ENCODE measurements at regions of chr22 and their contacts with region 1.

Region 1: DNA sequence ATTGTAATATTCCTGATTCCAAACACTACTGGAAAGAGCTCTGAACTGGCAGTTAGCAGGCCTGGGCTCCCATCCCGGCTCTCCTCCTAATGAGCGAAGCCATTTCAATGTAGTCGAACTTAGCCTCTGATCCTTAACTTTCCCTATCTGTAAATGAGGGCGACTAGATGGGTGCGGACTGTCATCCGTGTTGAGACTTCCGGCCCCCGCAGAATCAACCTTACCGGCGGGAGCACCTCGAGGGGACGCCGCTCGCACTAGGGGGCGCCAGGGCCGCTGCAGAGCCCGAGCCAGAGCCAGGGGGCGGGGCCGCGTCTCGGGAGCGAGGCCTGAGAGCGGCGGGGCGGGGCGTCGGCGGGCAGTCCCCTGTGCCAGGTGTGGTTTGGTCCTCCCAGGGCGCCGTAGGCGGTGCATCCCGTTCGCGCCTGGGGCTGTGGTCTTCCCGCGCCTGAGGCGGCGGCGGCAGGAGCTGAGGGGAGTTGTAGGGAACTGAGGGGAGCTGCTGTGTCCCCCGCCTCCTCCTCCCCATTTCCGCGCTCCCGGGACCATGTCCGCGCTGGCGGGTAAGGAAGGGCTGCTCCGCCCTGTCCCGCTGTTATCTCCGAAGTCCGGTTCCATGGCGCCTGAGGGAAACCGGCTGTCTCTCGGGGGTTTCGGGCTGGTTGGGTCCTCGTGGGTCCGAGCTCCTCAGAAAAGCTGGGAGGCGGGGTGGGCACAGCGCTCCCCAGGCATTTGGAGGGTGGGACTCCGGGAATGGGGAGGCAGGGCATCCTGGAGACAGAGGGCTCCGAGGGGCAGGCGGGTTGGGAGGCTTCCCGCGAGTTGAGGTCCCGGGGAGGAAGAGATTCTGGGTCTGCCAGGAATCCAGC is at the start of gene LIMK2:
- DNase-seq: peak; percentile 100
- ATAC-seq: peak; percentile 97
- H3K4me3 Mint-ChIP-seq: peak within 1 kb of the TSS; percentile 87
- H3K27ac Mint-ChIP-seq: peak within 1 kb of the TSS; percentile 90
- H3K4me1 Mint-ChIP-seq: peaks cover 29% of the 10 kb centered on the region
- H3K27me3 Mint-ChIP-seq: no peaks in the 10 kb centered on the region
- total RNA-seq, gene LIMK2: 38.9 to 39.9 TPM

Region 2: GRCh38 chr22:31227186-31227585 is 15.1 kb after region 1 on chr22:
- POLR2A ChIA-PET with region 1: interaction called, 11 read pairs
- DNase-seq: no peak
- ATAC-seq: no peak
- H3K4me3 Mint-ChIP-seq: no peak overlapping the region
- H3K27ac Mint-ChIP-seq: no peak overlapping the region
- H3K4me1 Mint-ChIP-seq: peaks cover 40% of the 10 kb centered on the region
- H3K27me3 Mint-ChIP-seq: no peaks in the 10 kb centered on the region

Region 3: DNA sequence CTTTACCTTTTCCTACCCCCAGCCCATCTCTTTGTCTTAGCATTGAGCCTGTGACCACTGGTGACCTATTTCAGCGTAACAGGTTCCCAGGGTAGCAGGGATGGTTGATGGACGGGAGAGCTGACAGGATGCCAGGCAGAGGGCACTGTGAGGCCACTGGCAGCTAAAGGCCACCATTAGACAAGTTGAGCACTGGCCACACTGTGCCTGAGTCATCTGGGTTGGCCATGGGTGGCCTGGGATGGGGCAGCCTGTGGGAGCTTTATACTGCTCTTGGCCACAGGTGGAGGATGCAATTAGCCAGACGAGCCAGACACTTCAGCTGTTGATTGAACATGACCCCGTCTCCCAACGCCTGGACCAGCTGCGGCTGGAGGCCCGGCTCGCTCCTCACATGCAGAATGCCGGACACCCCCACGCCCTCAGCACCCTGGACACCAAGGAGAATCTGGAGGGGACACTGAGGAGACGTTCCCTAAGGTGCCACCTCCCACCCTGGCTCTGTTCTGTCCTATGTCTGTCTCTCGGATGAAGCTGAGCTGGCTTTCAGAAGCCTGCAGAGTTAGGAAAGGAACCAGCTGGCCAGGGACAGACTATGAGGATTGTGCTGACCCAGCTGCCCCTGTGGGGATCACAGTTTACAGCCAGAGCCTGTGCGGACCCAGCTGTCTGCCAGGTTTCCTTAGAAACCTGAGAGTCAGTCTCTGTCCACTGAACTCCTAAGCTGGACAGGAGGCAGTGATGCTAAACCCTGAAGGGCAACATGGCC is 50.4 kb after region 1 on chr22:
- POLR2A ChIA-PET with region 1: no interaction called
- DNase-seq: no peak
- ATAC-seq: no peak
- H3K4me3 Mint-ChIP-seq: no peak overlapping the region
- H3K27ac Mint-ChIP-seq: no peak overlapping the region
- H3K4me1 Mint-ChIP-seq: no peaks in the 10 kb centered on the region
- H3K27me3 Mint-ChIP-seq: no peaks in the 10 kb centered on the region

Region 4: DNA sequence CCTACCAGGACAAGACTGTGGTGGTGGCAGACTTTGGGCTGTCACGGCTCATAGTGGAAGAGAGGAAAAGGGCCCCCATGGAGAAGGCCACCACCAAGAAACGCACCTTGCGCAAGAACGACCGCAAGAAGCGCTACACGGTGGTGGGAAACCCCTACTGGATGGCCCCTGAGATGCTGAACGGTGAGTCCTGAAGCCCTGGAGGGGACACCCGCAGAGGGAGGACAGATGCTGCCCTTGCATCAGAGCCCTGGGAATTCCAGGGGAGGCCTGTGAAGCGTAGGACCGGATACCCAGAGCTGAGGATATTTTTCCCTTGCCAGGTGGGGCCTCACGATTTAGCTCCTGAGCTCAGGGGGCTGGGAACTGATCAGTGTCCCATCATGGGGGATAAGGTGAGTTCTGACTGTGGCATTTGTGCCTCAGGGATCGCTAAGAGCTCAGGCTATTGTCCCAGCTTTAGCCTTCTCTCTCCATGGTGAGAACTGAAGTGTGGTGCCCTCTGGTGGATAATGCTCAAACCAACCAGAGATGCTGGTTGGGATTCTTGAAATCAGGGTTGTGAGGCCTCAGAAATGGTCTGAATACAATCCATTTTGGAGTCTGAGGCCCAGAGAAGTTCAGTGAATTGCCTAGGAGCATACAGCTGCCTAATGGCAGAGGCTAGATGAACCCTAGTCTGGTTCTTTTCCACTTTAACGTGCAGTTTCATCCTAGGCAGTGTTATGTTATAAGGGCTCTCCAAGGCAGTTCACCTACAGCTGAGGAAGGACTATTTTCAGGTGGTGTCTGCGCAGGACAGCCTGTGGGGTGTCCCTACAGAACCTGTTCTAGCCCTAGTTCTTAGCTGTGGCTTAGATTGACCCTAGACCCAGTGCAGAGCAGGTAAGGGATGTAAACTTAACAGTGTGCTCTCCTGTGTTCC is 60.7 kb after region 1 on chr22:
- POLR2A ChIA-PET with region 1: interaction called, 10 read pairs
- DNase-seq: no peak
- ATAC-seq: peak; percentile 51
- H3K4me3 Mint-ChIP-seq: no peak overlapping the region
- H3K27ac Mint-ChIP-seq: no peak overlapping the region
- H3K4me1 Mint-ChIP-seq: peaks cover 4% of the 10 kb centered on the region
- H3K27me3 Mint-ChIP-seq: no peaks in the 10 kb centered on the region